WTC11 (cell line): ENCODE measurements at regions of chr18 and their contacts with region 1.

Region 1: DNA sequence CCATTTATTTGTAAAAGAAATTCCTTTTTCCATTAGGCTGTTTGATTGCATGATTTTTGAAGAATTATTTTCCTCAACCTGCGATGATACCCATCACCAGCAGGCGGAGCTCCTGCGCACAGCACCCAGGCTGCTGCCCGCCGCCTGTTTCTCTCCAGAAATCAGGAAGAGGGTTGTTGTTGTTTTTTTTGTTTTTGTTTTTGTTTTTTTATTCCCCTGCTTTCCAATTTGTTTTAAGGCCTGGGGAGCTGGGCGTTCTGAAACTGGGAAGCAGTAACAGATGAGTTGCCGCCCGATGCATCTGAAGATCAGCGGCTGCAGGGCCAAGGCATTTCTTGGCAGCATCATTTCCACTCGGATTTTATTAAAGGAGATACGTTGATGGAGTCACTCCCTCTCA is 132.1 kb downstream of the MBP start:
- DNase-seq: peak; percentile 57
- ATAC-seq: no peak
- H3K4me3 Mint-ChIP-seq: no peak overlapping the region
- H3K27ac Mint-ChIP-seq: no peak overlapping the region
- H3K4me1 Mint-ChIP-seq: peaks cover 15% of the 10 kb centered on the region
- H3K27me3 Mint-ChIP-seq: no peaks in the 10 kb centered on the region
- CTCF ChIP-seq: peak; percentile 93

Region 2: DNA sequence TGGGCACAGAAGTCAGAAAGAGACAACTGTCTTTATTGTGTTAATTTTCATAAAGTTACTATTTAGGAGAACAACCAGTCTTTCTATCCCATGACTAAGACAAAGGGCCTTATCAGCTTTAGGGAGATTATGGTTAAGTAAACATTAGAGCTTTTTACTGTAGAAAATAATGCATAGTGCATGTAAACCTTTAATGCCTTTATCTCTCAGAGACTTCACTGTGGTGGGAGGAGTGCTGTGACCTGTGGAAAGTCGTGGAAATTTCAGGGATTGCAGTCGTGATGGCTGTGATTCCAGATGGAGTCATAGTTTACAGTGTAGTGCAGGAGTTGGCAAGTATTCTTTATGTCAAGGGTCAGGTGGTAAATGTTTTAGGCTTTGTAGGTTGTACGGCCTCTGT is 162.3 kb before region 1 on chr18:
- CTCF ChIA-PET with region 1: no interaction called
- POLR2A ChIA-PET with region 1: no interaction called
- DNase-seq: no peak
- ATAC-seq: no peak
- H3K4me3 Mint-ChIP-seq: no peak overlapping the region
- H3K27ac Mint-ChIP-seq: peak overlapping the region; percentile 75; the same call in 1 of the 2 replicates
- H3K4me1 Mint-ChIP-seq: peaks cover 15% of the 10 kb centered on the region
- H3K27me3 Mint-ChIP-seq: no peaks in the 10 kb centered on the region
- CTCF ChIP-seq: no peak

Region 3: DNA sequence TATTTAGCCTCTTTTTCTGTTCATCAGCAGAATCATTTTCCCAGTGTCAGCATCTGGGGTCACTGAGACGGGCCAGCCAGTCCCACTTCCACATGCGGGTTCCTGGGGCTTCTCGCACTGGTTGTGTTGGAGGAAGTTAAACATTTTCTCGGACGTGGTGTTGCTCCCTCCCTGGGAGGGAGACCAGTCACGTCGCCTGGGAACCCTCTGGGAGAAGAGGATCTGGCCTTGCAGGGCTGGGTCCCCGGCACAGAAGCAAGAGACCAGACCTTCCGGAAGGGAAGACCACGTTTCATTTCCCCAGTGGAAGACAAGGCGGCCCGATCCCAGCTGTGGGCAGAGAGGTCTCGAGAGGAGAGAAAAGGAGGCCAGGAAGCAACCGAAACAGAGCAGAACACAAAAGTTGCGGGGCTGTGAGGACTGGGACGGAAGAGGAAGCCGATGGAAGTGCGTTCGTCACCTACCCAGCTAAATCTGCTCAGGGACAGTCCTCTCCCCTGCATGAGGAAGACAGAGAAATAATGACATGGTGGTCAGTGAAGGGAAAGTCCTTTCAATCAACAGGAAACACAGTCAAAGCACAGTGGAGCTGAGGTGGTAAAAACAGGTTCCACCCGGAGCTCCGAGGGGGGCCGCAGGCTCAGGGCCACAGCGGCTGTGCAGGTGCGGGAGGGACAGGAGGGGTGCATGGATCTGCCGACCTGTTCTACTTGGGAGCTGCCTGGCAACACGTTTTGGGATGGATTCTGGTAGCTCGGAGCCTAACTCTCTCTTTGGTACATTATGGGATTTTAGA is 12.3 kb before region 1 on chr18:
- CTCF ChIA-PET with region 1: interaction called, 18 read pairs
- POLR2A ChIA-PET with region 1: no interaction called
- DNase-seq: no peak
- ATAC-seq: no peak
- H3K4me3 Mint-ChIP-seq: no peak overlapping the region
- H3K27ac Mint-ChIP-seq: 0 out of 2 replicates have a peak overlapping the region, but pooled peaks have one; percentile 16
- H3K4me1 Mint-ChIP-seq: peaks cover 28% of the 10 kb centered on the region
- H3K27me3 Mint-ChIP-seq: no peaks in the 10 kb centered on the region; the same call in 1 of the 2 replicates
- CTCF ChIP-seq: no peak